ENCODE measurements at regions of chr9 and their contacts with region 1.

Region 1: DNA sequence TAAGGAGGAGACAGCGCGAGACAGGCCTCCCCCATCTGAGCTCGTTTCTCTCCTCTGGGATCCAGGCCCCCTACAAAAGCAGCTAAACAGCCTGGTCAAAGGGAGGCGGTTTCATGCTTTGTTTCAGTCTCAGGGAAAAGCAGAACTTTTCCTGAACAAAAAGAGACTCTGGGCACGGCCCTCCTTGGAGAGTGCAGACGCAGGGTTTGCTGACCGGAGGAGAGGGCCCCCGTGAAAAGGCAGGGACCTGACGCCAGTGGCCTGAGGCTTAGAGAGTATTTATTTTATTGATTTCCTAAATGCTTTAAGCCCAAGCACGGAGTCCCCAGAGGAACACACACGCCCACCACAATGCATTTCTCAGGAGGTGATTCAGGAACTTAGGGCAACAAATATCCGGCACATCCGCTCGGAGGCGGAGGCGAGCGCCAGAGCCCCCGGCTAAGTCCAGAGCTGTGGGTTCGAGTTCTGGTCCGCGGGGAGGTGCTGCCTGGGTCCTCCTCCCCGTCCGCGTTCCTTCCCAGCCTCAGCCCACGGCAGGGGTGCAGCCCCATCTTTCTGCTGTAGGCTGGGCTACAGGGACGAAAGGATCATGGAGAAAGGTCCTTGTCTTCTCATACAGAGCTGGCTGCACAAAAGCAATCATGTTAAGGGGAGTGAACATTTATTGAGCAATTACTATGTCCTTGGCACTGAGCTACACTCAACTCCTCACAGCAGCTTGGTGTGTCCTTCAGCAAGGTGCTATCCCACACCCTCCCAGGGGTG is 40.0 kb downstream of the PTGES start:
- DNase-seq: peak; percentile 69
- H3K4me3 ChIP-seq: no peak overlapping the region
- H3K27ac ChIP-seq: peak overlapping the region; percentile 71
- H3K4me1 ChIP-seq: peaks cover 40% of the 10 kb centered on the region
- H3K27me3 ChIP-seq: no peaks in the 10 kb centered on the region
- CTCF ChIP-seq: no peak

Region 2: GRCh38 chr9:129697651-129697971 is 15.2 kb before region 1 on chr9:
- CTCF ChIA-PET with region 1: interaction called, 15 read pairs
- POLR2A ChIA-PET with region 1: no interaction called
- intact Hi-C with region 1: no loop called
- DNase-seq: no peak
- H3K4me3 ChIP-seq: peak overlapping the region; percentile 47
- H3K27ac ChIP-seq: peak overlapping the region; percentile 85
- H3K4me1 ChIP-seq: peaks cover 22% of the 10 kb centered on the region
- H3K27me3 ChIP-seq: no peaks in the 10 kb centered on the region
- CTCF ChIP-seq: no peak

Measured in A673 (cell line).